Activated T-helper 1 cell treated with anti-CD3 and anti-CD28 coated beads, Interleukin-12 subunit alpha, Interleukin-12 subunit beta, Interleukin-2, Interleukin-4 antibody, amounts not matched to agents 30 ng/mL and 10 ng/mL and 1 ng/mL, durations not matched to agents 14 hours and 24 hours and 36 hours (primary cell): ENCODE measurements at regions of chr3 and their contacts with region 1.

Region 1: DNA sequence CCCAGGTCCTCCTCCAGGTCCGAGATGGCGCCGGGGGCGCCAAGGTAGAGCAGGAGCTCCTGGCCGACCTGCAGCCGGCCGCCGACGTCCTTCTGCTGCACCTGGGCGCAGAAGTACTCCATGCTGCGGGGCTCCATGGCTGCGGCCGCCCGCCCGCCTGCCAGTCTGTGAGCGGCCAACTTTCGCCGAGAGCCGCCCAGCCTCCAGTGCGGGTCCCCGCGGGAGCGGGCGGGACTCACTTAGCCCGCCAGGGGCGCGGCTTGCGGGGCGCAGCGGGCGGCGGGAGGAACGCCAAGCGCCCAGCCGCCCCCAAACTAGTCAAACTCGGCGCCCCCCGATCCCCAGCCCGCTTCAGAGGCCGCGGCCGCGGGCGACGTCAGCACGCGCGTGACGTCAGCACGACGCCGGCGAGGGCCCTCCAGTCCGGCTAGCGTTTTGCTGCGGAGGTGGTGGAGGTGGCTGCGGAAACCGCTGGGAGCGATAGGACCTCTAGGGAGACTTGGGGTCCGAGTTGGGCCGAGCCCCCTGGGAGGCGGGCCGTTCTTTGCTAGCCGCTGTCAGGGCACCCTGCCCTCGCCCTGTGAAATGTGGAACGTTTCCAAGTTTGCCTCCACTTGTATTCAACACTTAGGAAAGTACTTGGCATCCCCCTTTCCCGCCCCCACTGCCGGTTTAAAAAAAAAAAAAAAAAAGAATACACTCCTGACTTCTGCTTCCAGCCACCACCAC is at the start of gene CLASP2:
- DNase-seq: peak; percentile 79
- H3K4me3 Mint-ChIP-seq: peak within 1 kb of the TSS; percentile 92
- H3K27ac Mint-ChIP-seq: peak within 1 kb of the TSS; percentile 94
- H3K4me1 Mint-ChIP-seq: peaks cover 7% of the 10 kb centered on the region
- H3K27me3 Mint-ChIP-seq: peaks cover 3% of the 10 kb centered on the region
- total RNA-seq, gene CLASP2: 61.9 and 67.0 TPM in 2 replicates

Region 2: GRCh38 chr3:33096093-33096868 is 621.7 kb before region 1 on chr3:
- intact Hi-C with region 1: loop called (anchors 1 kb)
- DNase-seq: peak; percentile 39
- H3K4me3 Mint-ChIP-seq: peak overlapping the region; percentile 97
- H3K27ac Mint-ChIP-seq: peak overlapping the region; percentile 86
- H3K4me1 Mint-ChIP-seq: peaks cover 43% of the 10 kb centered on the region
- H3K27me3 Mint-ChIP-seq: peaks cover 2% of the 10 kb centered on the region

Region 3: DNA sequence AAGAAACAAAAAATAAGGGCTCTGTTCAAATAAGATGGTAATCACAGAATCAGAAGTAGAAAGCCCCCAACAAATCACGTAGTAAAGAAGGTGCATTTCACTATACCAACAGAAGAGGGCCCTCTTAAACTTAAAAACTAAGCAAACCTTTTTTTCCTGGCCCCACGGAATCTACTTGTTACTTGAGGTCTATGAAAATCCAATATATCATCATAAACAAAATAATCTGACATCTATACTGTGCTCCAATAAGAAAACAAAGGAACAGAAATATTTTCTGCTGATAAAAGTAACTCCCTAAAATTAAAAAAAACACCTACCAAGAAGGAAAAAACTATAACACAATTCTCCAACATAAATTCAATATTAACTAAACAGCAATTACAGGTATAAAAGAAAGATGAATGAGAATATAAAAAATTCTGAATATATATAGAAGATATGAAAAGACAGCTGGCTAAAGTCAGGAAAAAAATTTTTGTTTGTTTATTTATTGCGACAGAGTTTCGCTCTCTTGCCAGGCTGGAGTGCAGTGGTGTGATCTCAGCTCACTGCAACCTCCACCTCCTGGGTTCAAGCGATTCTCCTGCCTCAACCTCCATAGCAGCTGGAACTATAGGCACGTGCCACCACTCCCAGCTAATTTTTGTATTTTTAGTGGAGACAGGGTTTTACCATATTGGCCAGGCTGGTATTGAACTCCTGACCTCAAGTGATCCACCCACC is 81.7 kb before region 1 on chr3:
- intact Hi-C with region 1: loop called (anchors 1 kb)
- DNase-seq: no peak
- H3K4me3 Mint-ChIP-seq: no peak overlapping the region
- H3K27ac Mint-ChIP-seq: no peak overlapping the region
- H3K4me1 Mint-ChIP-seq: peaks cover 6% of the 10 kb centered on the region
- H3K27me3 Mint-ChIP-seq: no peaks in the 10 kb centered on the region

Region 4: DNA sequence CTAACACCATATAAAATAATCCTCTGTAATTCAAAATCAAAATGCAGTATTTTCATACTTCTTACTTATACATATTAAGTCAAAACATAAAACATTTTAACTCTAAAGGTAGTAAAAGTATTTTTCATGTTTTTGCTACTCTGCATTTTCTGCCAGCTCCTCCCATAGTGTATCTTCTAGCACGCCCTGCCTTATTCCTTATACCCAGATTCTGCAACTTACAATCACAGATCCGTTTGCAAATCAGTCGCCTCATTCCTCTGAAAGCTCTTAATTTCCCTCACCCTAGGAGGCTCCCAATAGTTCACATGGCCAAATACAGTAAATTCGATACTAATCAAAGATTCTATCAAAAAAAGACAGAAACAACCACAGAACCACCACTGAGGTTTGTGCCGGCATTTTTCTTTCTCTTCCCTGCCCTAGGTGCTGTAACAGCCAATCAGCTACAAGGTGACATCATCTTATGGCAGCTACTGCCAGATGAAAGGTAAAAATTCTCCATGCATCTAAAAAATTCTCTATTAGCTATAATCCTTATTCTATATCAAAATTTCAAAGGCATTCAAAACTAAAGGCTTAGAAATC is 72.9 kb before region 1 on chr3:
- intact Hi-C with region 1: loop called (anchors 2 kb)
- DNase-seq: peak; percentile 5
- H3K4me3 Mint-ChIP-seq: peak overlapping the region; percentile 68
- H3K27ac Mint-ChIP-seq: no peak overlapping the region
- H3K4me1 Mint-ChIP-seq: peaks cover 6% of the 10 kb centered on the region
- H3K27me3 Mint-ChIP-seq: no peaks in the 10 kb centered on the region

Region 5: DNA sequence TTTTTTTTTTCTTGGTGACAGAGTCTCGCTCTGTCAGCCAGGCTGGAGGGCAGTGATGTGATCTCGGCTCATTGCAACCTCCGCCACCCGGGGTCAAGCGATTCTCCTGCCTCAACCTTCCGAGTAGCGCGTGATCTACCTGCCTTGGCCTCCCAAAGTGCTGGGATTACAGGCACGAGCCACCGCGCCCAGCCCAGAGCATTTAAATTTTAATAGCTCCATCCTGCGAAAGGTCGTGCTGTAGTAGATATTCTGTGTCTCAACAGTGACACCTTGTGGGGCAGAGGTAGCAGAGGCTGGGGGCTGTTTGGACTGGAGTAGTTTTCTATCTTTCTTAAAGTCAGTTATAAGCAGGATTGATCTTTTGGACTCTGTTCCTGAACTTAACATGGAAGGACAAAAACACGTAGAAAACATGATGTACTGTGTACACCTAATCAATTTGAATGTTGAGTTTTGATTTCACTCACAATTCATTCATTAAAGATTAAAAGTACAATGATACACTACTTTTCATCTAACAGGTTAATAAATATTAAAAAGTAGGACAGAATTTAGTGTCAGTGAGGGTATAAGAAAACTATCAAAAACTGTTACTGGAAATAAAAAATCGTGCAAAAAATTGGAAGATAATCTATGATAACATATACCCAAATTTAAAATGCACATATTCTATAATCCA is 69.4 kb after region 1 on chr3:
- intact Hi-C with region 1: loop called (anchors 2 kb)
- DNase-seq: peak; percentile 38
- H3K4me3 Mint-ChIP-seq: no peak overlapping the region
- H3K27ac Mint-ChIP-seq: no peak overlapping the region
- H3K4me1 Mint-ChIP-seq: peaks cover 18% of the 10 kb centered on the region
- H3K27me3 Mint-ChIP-seq: peaks cover 18% of the 10 kb centered on the region

Region 6: DNA sequence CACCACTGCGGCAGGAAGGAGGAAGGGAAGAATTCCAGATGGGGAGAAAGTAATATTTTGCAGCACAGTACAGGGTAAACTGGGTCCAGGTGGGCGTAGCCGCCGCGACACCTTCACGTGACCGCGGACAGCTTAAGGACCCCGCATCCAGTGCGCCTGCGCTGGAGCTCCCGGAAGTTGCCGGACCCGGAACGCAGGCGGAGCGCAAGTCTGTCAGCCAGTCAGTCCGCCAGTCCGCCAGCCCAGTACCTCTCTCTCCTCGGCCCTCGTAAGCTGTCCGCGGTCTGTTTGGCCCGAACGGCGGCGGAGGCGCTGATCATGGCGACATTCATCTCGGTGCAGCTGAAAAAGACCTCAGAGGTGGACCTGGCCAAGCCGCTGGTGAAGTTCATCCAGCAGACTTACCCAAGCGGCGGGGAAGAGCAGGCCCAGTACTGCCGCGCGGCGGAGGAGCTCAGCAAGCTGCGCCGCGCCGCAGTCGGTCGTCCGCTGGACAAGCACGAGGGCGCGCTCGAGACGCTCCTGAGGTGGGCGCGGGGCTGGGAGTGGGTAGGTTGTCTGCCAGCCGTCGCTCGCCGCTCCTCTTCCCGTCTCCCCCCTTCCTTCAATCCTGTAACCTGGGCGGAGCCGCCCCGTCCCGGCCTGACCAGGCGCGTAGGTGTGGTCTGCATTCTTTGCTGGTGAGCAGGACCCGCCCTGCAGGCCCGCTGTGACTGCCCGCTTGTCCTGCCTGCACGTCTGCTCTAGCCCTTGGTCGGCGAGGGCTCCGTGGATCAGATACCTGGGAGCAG is 80.6 kb after region 1 on chr3 and contains the start of gene PDCD6IP:
- intact Hi-C with region 1: loop called (anchors 1 kb)
- DNase-seq: peak; percentile 87
- H3K4me3 Mint-ChIP-seq: peak within 1 kb of the TSS; percentile 95
- H3K27ac Mint-ChIP-seq: peak within 1 kb of the TSS; percentile 95
- H3K4me1 Mint-ChIP-seq: peaks cover 48% of the 10 kb centered on the region
- H3K27me3 Mint-ChIP-seq: no peaks in the 10 kb centered on the region
- total RNA-seq, gene PDCD6IP: 171 and 179 TPM in 2 replicates